ENCODE measurements at regions of chr2 and their contacts with region 1.

Region 1: DNA sequence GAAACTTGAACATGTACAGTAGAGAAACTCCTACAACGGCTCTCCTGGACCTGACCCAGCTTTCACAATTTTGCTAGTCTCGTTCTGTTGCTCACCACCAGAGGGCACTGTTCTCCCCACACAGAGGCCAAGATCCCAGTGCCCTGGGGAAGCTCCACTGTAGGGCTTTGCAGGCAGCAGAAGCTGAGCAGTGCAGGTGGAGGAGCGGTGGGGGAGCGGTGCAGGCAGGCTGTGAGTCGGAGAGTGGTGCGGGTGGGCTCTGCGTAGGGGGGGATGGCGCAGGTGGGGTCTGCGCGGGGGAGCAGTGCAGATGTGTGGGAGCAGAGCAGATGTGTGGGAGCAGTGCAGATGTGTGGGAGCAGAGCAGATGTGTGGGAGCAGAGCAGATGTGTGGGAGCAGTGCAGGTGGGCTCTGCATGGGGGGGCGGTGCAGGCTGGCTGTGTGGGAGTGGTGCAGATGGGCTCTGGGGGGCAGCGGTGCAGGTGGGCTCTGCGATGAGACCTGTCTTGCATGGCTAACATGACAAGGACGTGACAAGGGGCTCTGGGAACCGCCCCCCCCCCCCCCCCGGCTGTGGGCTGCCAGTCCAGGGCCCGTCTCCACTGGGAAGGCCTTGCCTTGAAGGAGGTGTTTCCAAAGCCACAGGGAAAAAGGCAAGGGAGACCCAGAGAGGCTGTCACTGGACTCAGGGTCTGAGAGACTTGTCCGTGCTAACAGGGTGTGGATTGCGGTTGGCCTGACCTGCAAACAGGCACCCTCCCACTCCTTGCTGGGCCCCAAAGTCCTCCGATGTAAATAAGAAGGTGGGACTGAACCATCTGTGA is 7.3 kb downstream of the CYS1 start:
- DNase-seq: peak; percentile 59 to 89 (median 80)
- ATAC-seq: peak; percentile 97
- H3K4me3 ChIP-seq: no peak overlapping the region
- H3K4me3 Mint-ChIP-seq: no peak overlapping the region
- H3K27ac ChIP-seq: no peak overlapping the region
- H3K27ac Mint-ChIP-seq: no peak overlapping the region
- H3K4me1 ChIP-seq: no peaks in the 10 kb centered on the region
- H3K4me1 Mint-ChIP-seq: peaks cover 4% of the 10 kb centered on the region
- H3K27me3 ChIP-seq: peaks cover 4 to 11% of the 10 kb centered on the region in 2 experiments
- H3K27me3 Mint-ChIP-seq: peaks cover 35% of the 10 kb centered on the region
- CTCF ChIP-seq: peak; percentile 70

Region 2: DNA sequence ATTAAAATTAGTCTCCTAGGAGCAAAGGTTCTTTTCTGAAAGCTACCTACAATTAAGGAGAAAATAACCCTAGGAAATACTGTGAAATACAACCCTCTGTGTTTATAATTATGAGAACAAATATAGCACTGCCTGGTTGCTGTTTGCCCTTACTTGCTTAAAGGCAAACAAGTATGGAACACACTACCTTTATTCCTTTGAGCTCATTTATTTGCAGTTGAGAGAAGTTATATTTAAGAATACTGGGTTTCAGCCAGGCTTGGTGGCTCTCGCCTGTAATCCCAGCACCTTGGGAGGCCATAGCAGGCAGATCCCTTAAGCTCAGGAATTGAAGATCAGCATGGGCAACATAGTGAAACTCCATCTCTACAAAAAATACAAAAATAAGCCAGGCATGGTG is 621.6 kb before region 1 on chr2:
- CTCF ChIA-PET with region 1: no interaction called
- POLR2A ChIA-PET with region 1: no interaction called
- intact Hi-C with region 1: no loop called
- DNase-seq: no peak
- ATAC-seq: no peak
- H3K4me3 ChIP-seq: no peak overlapping the region
- H3K4me3 Mint-ChIP-seq: no peak overlapping the region
- H3K27ac ChIP-seq: no peak overlapping the region
- H3K27ac Mint-ChIP-seq: no peak overlapping the region
- H3K4me1 ChIP-seq: no peaks in the 10 kb centered on the region
- H3K4me1 Mint-ChIP-seq: no peaks in the 10 kb centered on the region
- H3K27me3 ChIP-seq: no peaks in the 10 kb centered on the region
- H3K27me3 Mint-ChIP-seq: no peaks in the 10 kb centered on the region
- CTCF ChIP-seq: no peak

Region 3: DNA sequence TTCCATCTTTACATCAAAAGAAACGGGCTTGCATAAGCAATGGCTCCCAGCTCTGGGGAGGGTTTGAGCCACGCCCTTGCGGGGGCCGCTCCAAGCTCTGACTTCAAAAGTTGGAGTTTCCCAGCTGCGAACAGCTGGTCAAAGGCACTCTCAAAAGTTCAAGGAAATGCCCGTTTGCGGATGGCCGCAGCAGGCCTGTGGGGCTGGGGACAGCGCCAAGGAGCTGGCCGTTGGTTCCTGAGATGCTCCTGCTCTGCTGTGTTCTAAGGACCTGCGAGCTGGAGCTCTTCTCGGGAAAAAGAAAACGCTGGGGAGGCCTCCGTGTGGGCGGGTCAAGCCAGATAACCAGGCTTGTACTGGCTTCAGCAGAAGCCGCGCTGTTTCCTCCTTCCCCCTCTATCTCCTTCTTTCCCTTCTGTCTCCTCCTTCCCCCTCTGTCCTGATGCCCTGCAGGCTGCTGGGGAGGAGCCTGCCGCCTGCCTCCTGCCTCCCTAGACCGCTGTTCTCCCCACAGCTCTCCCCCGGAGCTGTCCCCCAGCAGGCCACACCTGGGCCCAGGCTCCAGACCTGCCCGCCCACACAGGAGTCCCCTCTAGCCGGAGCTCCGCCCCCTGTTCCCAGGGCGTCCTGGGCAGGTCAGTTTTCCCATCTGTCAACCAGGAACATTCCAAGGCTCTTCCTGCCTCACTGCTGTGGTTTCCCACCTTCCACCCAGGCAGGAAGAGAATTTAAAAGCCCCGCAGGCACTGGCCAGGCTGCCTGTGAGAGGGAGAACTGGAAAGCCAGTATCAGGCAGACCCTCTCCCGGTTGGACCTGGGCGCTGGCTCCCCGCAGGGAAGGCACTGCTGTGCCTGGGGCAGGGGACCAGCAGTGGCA is 15.4 kb before region 1 on chr2:
- CTCF ChIA-PET with region 1: interaction called, 21 read pairs
- POLR2A ChIA-PET with region 1: interaction called, 3 read pairs
- intact Hi-C with region 1: no loop called
- DNase-seq: no peak
- ATAC-seq: no peak
- H3K4me3 ChIP-seq: no peak overlapping the region
- H3K4me3 Mint-ChIP-seq: no peak overlapping the region
- H3K27ac ChIP-seq: no peak overlapping the region
- H3K27ac Mint-ChIP-seq: no peak overlapping the region
- H3K4me1 ChIP-seq: no peaks in the 10 kb centered on the region
- H3K4me1 Mint-ChIP-seq: no peaks in the 10 kb centered on the region
- H3K27me3 ChIP-seq: no peaks in the 10 kb centered on the region
- H3K27me3 Mint-ChIP-seq: no peaks in the 10 kb centered on the region
- CTCF ChIP-seq: no peak

Region 4: DNA sequence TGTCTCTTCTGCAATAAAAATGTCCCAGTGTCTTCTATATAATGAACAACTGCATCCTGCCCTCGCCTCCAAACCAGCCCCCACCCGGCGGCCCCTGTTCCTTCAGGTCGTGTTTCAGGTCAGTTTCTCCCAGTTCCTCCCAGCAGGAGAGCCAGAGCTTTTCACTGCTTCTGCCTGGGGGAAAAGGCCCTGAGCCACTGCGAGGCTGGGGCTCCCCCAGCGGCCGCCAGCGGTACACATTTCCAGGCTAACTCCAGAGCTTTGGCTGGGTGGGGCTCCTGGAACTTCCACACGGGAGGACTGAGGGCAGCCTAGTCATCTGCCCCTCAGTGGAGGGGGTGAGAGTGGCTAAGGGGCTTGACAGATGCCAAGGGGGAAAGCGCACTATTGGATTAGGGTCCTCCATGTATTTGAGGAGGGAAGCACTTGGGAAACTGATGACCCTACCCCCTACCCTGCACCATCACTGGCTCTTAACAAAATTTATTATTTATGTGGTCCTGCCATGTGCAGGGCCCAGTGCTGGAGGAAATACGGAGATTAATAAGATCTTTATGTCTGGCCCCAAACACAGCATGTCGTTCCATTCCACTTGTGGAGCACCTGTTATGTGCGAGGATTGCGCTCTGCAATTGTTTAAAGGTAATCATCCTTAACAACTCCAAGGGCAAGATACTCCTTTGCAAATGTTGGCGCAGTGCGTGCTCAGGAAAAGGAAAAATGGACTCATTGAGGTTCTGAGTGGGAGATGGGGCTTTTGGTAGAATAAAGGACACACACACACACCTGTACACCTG is 24.7 kb after region 1 on chr2:
- CTCF ChIA-PET with region 1: interaction called, 89 read pairs
- POLR2A ChIA-PET with region 1: interaction called, 3 read pairs
- intact Hi-C with region 1: loop called (anchors 1 kb)
- DNase-seq: peak in 4 of 9 experiments; percentile 32 to 55 (median 46)
- ATAC-seq: peak; percentile 62
- H3K4me3 ChIP-seq: no peak overlapping the region
- H3K4me3 Mint-ChIP-seq: no peak overlapping the region
- H3K27ac ChIP-seq: no peak overlapping the region
- H3K27ac Mint-ChIP-seq: no peak overlapping the region
- H3K4me1 ChIP-seq: no peaks in the 10 kb centered on the region
- H3K4me1 Mint-ChIP-seq: no peaks in the 10 kb centered on the region
- H3K27me3 ChIP-seq: peaks cover 0 to 11% of the 10 kb centered on the region in 2 experiments
- H3K27me3 Mint-ChIP-seq: peaks cover 32% of the 10 kb centered on the region
- CTCF ChIP-seq: peak; percentile 67

Region 5: GRCh38 chr2:10267551-10268465 is 194.9 kb after region 1 on chr2:
- CTCF ChIA-PET with region 1: no interaction called
- POLR2A ChIA-PET with region 1: no interaction called
- intact Hi-C with region 1: loop called in 1 of 2 experiments (anchors 1 kb)
- DNase-seq: no peak
- ATAC-seq: no peak
- H3K4me3 ChIP-seq: no peak overlapping the region
- H3K4me3 Mint-ChIP-seq: no peak overlapping the region
- H3K27ac ChIP-seq: no peak overlapping the region
- H3K27ac Mint-ChIP-seq: no peak overlapping the region
- H3K4me1 ChIP-seq: peaks cover 10% of the 10 kb centered on the region
- H3K4me1 Mint-ChIP-seq: peaks cover 6% of the 10 kb centered on the region
- H3K27me3 ChIP-seq: no peaks in the 10 kb centered on the region
- H3K27me3 Mint-ChIP-seq: no peaks in the 10 kb centered on the region
- CTCF ChIP-seq: no peak

Region 6: DNA sequence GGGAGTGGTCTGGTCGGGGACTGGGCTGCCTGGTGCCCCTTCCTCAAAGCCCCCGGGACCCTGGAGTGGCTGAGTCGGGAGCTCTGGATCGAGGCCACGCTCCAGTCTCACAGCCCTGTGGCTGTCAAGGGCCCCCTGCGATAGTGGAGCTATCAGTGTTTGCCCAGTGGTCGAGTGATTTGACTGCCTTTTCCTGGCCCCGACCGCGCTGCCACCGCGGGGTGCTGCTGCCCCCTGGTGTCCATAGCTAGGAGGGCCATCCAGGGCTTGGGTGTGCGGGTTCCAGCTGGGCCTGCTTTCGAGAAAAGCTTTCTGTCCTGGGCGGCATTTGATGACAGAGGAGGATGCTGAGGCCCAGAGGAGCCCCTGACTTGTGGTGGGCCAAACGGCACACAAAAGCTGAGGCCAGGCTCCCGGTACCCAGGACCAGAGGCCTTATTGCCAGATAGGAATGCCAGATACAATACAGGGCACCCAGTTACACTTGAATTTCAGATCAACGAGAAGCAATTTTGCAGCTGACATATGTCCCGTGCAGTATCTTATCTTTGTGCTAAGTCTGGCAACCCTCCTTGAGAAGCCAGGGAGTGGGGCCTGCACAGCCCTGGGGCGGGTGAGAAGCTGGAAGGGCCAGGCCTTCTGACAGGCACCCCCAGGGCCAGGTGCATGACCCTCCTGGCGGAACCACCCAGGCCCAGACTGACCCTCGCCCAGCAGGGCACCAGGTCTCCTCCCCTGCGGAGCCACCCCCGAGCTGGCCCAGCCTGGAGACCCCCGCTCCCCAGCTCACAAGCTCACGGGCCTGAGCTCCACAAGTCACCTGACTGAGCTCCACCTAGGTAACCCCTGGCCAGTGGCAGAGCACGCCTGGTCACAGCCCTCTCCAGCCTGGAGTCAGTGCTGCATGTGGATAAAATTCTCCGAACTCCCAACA is 362.3 kb after region 1 on chr2:
- CTCF ChIA-PET with region 1: interaction called, 168 read pairs
- POLR2A ChIA-PET with region 1: interaction called, 7 read pairs
- intact Hi-C with region 1: loop called (anchors 1 kb)
- DNase-seq: peak; percentile 51 to 86 (median 74)
- ATAC-seq: peak; percentile 74
- H3K4me3 ChIP-seq: no peak overlapping the region
- H3K4me3 Mint-ChIP-seq: no peak overlapping the region
- H3K27ac ChIP-seq: no peak overlapping the region
- H3K27ac Mint-ChIP-seq: no peak overlapping the region
- H3K4me1 ChIP-seq: peaks cover 14% of the 10 kb centered on the region
- H3K4me1 Mint-ChIP-seq: peaks cover 16% of the 10 kb centered on the region
- H3K27me3 ChIP-seq: peaks cover 0 to 4% of the 10 kb centered on the region in 2 experiments
- H3K27me3 Mint-ChIP-seq: peaks cover 2% of the 10 kb centered on the region
- CTCF ChIP-seq: peak; percentile 93

Region 7: GRCh38 chr2:10548626-10549025 is 475.8 kb after region 1 on chr2:
- CTCF ChIA-PET with region 1: no interaction called
- POLR2A ChIA-PET with region 1: no interaction called
- intact Hi-C with region 1: no loop called
- DNase-seq: no peak
- ATAC-seq: no peak
- H3K4me3 ChIP-seq: no peak overlapping the region
- H3K4me3 Mint-ChIP-seq: no peak overlapping the region
- H3K27ac ChIP-seq: no peak overlapping the region
- H3K27ac Mint-ChIP-seq: no peak overlapping the region
- H3K4me1 ChIP-seq: peaks cover 19% of the 10 kb centered on the region
- H3K4me1 Mint-ChIP-seq: peaks cover 29% of the 10 kb centered on the region
- H3K27me3 ChIP-seq: no peaks in the 10 kb centered on the region
- H3K27me3 Mint-ChIP-seq: peaks cover 22% of the 10 kb centered on the region
- CTCF ChIP-seq: no peak